ENCODE measurements at regions of chr3 and their contacts with region 1.

Region 1: DNA sequence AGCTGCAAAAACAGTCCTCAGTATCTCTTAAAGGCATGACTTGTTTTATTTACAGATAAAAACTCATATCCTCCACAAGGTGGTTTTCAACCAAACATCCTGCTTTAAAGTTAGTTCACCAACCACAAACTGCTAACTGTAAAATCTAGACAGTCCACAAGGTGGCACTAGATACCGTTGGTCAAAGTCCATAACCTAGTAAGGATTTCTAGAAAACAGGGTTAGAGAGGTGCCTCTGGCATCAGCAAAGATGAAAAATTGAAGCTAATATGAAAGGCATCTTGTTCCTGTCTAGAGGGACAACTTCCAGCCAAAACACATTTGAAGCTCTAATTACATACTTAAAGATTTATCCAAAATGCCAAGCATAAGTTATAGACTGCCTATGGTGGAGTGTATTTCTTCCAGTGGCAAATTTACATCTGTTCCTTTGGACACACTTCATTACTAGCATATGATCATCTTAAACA is 56.0 kb downstream of the ZMAT3 start:
- DNase-seq: no peak
- H3K4me3 ChIP-seq: no peak overlapping the region
- CTCF ChIP-seq: peak; percentile 59

Region 2: DNA sequence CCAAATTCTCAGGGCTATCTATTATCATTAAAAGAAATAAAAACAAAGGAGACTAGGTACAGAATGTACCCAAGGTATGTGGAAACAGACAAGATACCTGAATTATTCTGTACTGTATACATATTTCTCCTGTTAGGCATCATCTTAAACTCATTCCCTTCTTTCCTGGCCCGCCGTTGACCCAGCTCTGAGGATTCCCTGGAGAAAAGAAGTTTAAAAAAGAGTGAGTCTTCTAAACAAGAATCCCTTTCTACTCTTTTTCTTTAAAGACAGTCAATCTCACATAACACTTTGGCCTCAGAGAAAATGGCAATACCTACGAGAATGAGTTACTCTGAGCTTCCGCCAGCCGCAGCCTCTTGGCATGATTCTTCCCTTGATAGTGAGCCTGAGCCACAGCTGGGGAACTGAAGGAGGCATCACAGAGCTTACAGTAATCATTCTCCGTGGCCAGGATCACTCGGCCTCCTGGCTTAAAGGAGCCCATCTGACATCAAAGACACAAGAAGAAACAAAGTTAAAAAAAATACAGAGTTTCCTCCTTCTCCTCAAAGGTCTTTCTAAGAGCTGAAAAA is 11.8 kb after region 1 on chr3:
- CTCF ChIA-PET with region 1: interaction called, 60 read pairs
- POLR2A ChIA-PET with region 1: no interaction called
- DNase-seq: no peak
- H3K4me3 ChIP-seq: no peak overlapping the region
- CTCF ChIP-seq: no peak

Region 3: DNA sequence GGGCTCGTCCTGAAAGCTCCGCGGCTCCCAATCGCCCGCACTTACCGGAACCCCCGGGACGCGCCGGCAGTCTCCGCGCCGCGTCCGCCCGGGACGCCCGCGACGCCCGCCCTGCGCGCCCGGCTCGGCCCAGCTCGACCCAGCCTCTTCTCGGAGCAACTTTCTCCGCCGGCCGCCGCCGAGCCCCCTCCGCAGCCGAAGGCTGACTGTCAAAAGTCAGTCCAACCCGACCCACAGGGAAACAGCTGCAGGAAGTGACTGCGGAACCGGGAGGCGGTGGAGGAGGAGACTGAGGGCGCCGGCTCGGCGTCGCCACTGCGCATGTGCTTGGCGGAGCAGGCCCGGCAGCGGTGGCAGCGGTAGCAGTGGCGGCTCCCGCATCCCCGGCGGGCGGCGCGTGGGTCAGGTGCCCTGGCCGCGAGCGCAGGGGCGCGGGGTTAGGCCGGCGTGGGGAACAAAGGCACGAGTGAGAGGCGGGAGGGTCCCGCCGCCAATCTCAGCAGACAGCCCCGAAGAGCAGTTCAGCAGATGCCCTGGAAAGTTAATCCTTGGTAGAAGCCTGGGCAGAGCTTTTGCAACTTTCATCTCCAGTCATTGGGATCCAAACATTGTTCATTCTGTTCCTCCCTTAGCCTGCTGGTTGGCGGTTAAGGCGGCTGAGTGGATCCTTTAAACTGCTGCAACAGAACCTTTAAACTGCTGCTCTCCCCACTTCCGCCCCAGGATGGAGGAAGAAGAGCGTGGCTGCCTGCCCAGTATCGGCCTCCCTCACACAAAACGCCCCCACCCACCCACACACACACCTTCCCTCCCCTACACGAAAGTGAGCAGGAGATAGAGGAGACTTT is 56.2 kb after region 1 on chr3 and contains the start of gene ZMAT3:
- CTCF ChIA-PET with region 1: interaction called, 36 read pairs
- POLR2A ChIA-PET with region 1: no interaction called
- DNase-seq: no peak
- H3K4me3 ChIP-seq: peak within 1 kb of the TSS; percentile 92
- CTCF ChIP-seq: no peak

Region 4: GRCh38 chr3:179098388-179099077 is 82.9 kb after region 1 on chr3:
- CTCF ChIA-PET with region 1: interaction called, 20 read pairs
- POLR2A ChIA-PET with region 1: no interaction called
- DNase-seq: no peak
- H3K4me3 ChIP-seq: peak overlapping the region; percentile 36
- CTCF ChIP-seq: no peak

Region 5: DNA sequence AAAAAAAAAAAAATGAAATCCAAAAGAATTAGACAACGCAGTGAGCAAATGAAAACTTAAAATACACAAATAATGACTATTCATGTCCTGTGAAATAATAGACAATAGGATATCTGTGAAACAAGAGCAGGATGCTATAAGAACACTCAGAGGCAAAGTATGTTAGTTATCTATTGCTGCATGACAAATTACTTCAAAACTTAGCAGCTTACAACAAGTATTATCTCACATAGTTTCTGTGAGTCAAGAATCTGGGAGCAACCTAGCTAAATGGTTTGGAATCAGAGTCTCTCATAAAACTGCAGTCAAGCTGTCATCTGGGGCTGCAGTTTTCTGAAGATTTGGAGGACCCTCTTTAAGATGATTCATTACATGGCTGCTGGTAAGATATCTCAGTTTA is 92.5 kb after region 1 on chr3:
- CTCF ChIA-PET with region 1: interaction called, 15 read pairs
- POLR2A ChIA-PET with region 1: no interaction called
- DNase-seq: no peak
- H3K4me3 ChIP-seq: no peak overlapping the region
- CTCF ChIP-seq: no peak

Region 6: GRCh38 chr3:179147873-179148615 is 132.5 kb after region 1 on chr3 and contains the start of gene PIK3CA:
- CTCF ChIA-PET with region 1: interaction called, 11 read pairs
- POLR2A ChIA-PET with region 1: no interaction called
- DNase-seq: peak; percentile 91
- H3K4me3 ChIP-seq: peak within 1 kb of the TSS; percentile 69
- CTCF ChIP-seq: no peak

Region 7: DNA sequence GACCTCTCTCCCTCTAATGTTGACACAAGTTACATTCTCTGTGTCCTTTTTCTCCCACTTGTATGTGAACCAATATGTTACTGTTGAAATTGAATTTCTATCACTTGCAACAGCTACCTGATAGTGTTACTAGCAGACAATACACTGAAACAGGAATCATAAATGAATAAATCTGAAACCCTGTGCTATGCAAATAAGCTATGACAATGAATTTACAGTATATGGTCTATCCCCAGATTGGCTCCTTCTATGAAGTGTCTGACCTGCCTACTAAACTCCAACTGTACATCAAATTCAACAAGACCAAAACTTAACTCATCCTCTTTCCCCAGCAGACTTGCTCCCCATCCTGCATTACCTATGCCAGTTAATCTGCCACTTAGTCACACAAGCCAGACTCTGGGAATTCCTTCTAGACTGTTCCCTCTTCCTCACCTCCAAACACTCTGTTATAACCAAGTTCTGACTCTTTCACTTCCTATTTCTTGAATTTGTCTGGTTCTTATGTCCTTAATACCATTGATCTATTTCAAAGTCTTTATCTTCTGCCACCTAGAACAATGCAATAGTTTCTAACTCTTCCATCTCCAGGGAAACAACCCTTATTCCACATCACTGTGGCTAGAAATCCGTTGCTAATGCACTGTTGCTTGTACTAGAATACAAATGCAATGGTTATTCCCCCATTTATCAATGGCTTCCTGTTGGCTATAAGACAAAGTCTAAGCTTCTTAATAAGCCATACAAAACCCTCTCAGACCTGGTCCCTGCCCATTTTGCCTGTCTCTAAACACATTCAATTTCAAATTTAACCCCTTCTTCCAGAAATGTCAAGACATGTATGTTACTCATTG is 293.9 kb after region 1 on chr3:
- CTCF ChIA-PET with region 1: interaction called, 45 read pairs
- POLR2A ChIA-PET with region 1: no interaction called
- DNase-seq: no peak
- H3K4me3 ChIP-seq: no peak overlapping the region
- CTCF ChIP-seq: no peak